ENCODE measurements at regions of chrX and their contacts with region 1.

Region 1: DNA sequence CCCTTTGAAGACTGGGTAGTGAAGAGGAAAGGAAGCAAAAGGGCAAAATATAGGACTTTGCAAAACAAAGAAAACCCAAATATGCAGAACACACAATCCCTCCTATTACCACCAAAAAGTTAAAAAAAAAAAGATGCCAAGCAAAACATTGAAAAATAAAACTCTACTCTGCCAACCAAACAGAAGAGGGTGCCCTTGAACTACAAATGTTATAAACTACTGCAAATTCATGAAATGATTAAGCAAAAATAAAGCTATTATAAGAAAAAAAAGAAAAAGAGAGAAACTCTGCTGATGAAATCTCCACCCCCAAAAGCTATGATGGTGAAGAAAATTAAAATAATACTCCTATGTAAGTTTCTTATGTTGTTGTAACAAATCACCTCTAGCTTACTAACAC is 168.5 kb upstream of the STK26 start:
- DNase-seq: no peak
- ATAC-seq: no peak
- H3K4me3 ChIP-seq: no peak overlapping the region
- H3K27ac ChIP-seq: no peak overlapping the region
- H3K4me1 ChIP-seq: no peaks in the 10 kb centered on the region
- H3K27me3 ChIP-seq: peaks cover 0 to 97% (median 0%) of the 10 kb centered on the region in 7 donors
- CTCF ChIP-seq: peak in 2 of 9 donors; percentile 20 to 25

Region 2: DNA sequence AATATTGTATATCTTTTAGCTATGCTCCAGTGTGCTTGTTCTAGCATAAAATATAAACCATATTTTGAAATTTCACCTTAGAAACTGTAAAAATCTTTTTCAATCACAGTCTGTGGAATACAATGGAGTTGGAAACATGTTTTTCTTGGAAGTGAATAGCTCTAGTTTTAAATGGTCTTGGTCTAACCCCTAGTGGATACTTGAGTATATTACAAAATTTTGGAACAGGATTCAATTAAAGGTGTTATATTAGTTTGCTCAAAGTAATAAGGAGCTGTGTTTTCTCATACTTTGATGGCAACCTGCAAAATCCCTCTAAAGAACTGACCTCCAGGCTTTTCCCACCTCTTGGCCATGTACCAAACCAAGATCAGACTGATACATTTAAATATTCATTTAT is 216.7 kb after region 1 on chrX:
- intact Hi-C with region 1: loop called in 3 of 10 experiments (anchors 5 to 10 kb)
- DNase-seq: no peak
- ATAC-seq: no peak
- H3K4me3 ChIP-seq: peak overlapping the region in 1 of 10 donors; percentile 3
- H3K27ac ChIP-seq: no peak overlapping the region
- H3K4me1 ChIP-seq: no peaks in the 10 kb centered on the region
- H3K27me3 ChIP-seq: peaks cover 0 to 65% (median 0%) of the 10 kb centered on the region in 7 donors
- CTCF ChIP-seq: peak in 6 of 9 donors; percentile 22 to 44 (median 34)

Region 3: GRCh38 chrX:132304599-132304998 is 450.0 kb after region 1 on chrX:
- intact Hi-C with region 1: no loop called
- DNase-seq: no peak
- ATAC-seq: no peak
- H3K4me3 ChIP-seq: no peak overlapping the region
- H3K27ac ChIP-seq: no peak overlapping the region
- H3K4me1 ChIP-seq: no peaks in the 10 kb centered on the region
- H3K27me3 ChIP-seq: no peaks in the 10 kb centered on the region
- CTCF ChIP-seq: no peak

Region 4: GRCh38 chrX:132631579-132632232 is 777.1 kb after region 1 on chrX:
- intact Hi-C with region 1: loop called in 3 of 10 experiments (anchors 5 to 10 kb)
- DNase-seq: no peak
- ATAC-seq: peak in 1 of 8 donors; percentile 60
- H3K4me3 ChIP-seq: no peak overlapping the region
- H3K27ac ChIP-seq: no peak overlapping the region
- H3K4me1 ChIP-seq: no peaks in the 10 kb centered on the region
- H3K27me3 ChIP-seq: peaks cover 0 to 69% (median 0%) of the 10 kb centered on the region in 7 donors
- CTCF ChIP-seq: peak in 7 of 9 donors; percentile 41 to 58 (median 54)

Measured in heart right ventricle (tissue), 16 donors.